Esophagus muscularis mucosa (tissue), 4 donors: ENCODE measurements at regions of chr6 and their contacts with region 1.

Region 1: DNA sequence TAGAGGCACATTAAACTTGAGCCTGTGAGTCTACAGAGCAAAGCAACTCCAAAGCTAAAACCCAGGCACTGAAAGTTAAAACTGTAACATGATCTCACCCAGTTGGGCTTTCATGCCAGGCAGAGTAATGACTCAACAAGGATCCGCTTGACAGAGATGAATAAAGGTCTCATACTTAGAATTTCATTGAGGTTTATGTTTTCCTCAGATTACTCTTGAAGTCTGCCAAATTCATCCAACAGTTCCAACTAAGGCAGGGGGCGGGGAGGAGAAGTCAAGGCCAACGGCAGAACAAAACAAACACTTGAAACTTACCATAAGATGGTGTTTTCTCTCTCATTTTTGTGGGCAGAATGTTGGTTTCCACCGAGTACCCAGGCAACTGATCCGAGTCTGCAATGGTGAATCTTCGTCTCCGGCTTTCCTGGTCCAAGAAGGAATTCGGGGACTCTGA is 54.0 kb upstream of the IPCEF1 start:
- DNase-seq: no peak
- H3K4me3 ChIP-seq: peak overlapping the region in 2 of 4 donors; percentile 10 to 18
- H3K27ac ChIP-seq: peak overlapping the region; percentile 84 to 89 (median 86)
- H3K4me1 ChIP-seq: peaks cover 29 to 48% (median 46%) of the 10 kb centered on the region in 4 donors
- H3K27me3 ChIP-seq: no peaks in the 10 kb centered on the region
- CTCF ChIP-seq: no peak
- EP300 ChIP-seq: no peak
- POLR2A ChIP-seq: no peak

Region 2: DNA sequence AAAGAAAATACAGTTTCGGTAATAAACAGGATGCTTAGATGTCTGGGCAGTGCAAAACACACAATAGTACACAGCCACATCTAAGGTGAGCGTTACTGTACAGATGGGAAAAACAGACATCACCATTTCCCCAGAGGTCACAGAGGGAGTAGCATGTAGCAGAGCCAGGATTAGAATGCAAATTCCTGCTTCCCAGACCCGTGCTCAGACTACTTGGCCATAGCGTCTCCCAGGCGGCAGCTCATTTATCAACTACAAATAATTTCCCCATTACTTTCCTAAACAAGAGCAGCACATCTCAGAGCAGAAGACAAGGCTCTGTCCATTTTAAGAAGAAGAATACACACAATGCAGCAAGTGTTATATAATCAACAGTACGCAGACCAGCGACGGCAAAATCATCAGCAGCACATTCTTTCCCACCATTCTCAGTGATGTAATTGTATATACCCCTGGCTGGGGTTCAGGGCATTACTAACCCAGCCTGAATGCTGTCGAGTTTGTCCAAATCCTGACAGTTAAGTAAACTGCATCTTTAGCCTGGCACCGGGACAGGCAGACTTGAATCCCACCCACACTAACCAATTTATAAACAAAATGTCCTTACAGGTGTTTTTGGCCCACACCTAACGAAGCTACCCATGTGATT is 37.9 kb after region 1 on chr6:
- intact Hi-C with region 1: loop called (anchors 5 kb)
- DNase-seq: no peak
- H3K4me3 ChIP-seq: peak overlapping the region in 3 of 4 donors; percentile 5 to 24 (median 16)
- H3K27ac ChIP-seq: peak overlapping the region; percentile 75 to 84 (median 80)
- H3K4me1 ChIP-seq: peaks cover 32 to 66% (median 55%) of the 10 kb centered on the region in 4 donors
- H3K27me3 ChIP-seq: no peaks in the 10 kb centered on the region
- CTCF ChIP-seq: peak in 1 of 3 experiments; percentile 60
- EP300 ChIP-seq: peak; percentile 82
- POLR2A ChIP-seq: no peak

Region 3: GRCh38 chr6:154537511-154538325 is 127.1 kb after region 1 on chr6:
- intact Hi-C with region 1: no loop called
- DNase-seq: no peak
- H3K4me3 ChIP-seq: no peak overlapping the region
- H3K27ac ChIP-seq: no peak overlapping the region
- H3K4me1 ChIP-seq: no peaks in the 10 kb centered on the region
- H3K27me3 ChIP-seq: no peaks in the 10 kb centered on the region
- CTCF ChIP-seq: no peak
- EP300 ChIP-seq: no peak
- POLR2A ChIP-seq: no peak